ENCODE measurements at regions of chr20 and their contacts with region 1.

Region 1: DNA sequence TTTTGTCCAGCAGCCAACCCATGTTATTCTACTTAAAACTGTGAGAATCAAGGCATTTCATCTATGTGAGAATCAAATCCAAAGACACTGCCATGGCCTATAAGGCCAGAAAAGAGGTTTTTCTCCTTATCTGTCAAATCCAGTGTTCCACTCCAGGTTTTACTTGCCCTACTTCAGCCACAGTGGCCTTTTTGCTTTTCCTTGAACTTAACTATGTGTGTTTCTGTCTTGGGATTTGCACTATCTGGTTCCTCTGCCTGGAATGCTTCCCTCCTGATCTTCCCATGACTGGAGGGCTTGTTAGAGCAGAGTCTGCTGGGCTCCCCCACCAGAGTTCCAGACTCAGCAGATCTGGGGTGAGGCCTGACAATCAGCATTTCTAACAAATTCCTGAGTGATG is 113.1 kb upstream of the DOK5 start:
- DNase-seq: no peak
- H3K4me3 ChIP-seq: no peak overlapping the region
- H3K27ac ChIP-seq: no peak overlapping the region
- H3K4me1 ChIP-seq: no peaks in the 10 kb centered on the region
- H3K27me3 ChIP-seq: no peaks in the 10 kb centered on the region
- CTCF ChIP-seq: no peak
- POLR2A ChIP-seq: no peak

Region 2: DNA sequence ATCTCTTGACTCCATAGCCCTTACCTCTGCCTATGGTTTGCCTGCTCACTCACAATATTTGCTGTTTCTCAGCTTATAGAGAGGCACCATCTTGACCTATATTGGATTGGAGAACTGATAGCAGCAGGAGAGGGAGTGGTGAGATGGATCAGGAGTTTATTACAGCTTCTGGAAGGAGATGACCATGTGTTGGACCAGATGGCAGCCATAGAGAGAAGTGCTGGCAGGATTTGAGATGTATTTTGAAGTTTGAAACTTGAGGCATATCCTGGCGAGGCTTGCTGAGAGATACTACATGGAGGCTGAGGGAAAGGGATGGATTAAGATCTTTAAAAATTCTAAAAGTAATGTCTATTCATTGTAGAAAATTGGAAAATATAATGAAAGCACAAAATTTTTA is 1972.7 kb before region 1 on chr20:
- intact Hi-C with region 1: loop called (anchors 5 kb)
- DNase-seq: no peak
- H3K4me3 ChIP-seq: no peak overlapping the region
- H3K27ac ChIP-seq: no peak overlapping the region
- H3K4me1 ChIP-seq: no peaks in the 10 kb centered on the region
- H3K27me3 ChIP-seq: no peaks in the 10 kb centered on the region
- CTCF ChIP-seq: no peak
- POLR2A ChIP-seq: no peak

Region 3: DNA sequence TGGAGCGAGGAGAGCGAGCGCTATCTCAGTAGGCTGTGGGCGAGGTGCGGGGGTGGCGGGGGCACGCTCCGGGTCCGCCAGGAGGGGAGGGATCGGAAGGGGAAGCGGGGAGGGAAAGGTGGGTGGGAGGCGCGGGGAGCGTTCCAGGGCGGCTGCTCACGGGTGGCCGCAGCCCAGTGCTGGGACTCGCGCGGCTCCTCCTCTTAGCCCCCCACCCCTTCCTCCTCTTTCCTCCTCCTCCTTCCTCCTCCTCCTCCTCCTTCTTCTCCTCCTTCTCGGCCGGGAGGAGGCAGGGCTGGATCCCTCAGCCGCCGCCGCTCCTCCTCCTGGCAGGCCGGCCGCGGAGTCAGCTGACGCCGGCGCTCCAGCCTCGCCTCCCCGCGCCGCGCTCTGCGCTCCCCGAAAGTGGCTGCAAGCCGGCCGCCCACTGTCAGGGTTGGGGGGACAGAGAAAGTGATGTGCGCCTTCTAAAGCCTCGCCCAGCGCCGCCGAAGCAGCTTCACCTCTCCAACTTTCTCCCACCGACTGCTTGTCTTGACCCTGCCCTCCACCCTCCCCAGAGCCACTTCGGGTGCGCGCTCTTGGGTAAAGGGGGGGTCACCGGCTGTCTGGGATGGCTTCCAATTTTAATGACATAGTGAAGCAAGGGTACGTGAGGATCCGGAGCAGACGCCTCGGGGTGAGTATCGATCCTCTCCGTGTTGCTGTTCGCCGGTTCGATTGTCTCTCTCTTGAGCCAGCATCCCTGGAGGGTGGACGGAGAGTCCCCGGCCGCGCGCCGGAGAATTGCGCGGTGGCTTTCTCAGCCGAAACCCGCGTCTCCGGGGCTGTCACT is 113.3 kb after region 1 on chr20 and contains the start of gene DOK5:
- intact Hi-C with region 1: no loop called
- DNase-seq: no peak
- H3K4me3 ChIP-seq: peak within 1 kb of the TSS; percentile 65 to 72 (median 66)
- H3K27ac ChIP-seq: peak within 1 kb of the TSS; percentile 48 to 59
- H3K4me1 ChIP-seq: no peaks in the 10 kb centered on the region
- H3K27me3 ChIP-seq: peaks cover 0 to 12% of the 10 kb centered on the region in 2 donors
- CTCF ChIP-seq: no peak
- POLR2A ChIP-seq: no peak
- total RNA-seq, gene DOK5: 2.0 to 4.0 (median 3.4) TPM

Measured in breast epithelium (tissue), 4 donors.